ENCODE measurements at regions of chr2 and their contacts with region 1.

Region 1: DNA sequence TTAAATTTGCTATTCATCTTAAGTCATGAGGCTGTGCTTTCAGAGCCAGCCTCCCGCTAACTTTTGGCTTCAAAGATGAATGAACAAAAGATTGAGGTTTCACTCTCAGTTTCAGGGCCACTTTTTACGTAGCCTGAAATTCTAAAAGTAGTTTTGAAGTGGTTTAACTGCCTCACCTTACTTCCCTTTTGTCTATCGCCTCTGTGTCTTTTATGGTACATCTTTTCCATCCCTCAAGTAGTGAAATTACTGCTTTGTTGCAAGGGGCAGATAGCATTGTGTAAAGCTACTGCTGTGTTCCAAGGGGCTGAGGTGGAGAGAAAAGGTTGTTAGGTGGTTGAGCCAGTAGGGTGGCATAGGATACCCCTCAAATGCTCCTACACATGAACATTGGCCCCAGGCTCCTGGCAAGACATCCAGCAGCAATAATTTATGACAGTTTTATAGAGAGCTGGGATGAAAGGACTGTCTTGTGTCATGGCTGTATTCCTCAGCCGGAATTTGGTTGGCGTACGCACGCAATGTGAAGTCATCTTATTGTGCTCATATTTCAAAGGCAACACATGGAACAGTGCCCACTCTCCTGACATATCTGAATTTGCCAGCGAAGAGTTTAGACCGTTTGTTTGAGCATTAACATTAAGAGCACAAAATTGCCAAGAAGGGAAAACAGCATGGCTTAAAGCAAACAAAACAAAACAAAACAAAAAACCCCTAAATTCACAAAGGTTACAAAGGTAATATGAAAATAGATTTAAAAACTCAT is 32.2 kb downstream of the QPCT start:
- DNase-seq: peak; percentile 53
- H3K4me3 Mint-ChIP-seq: peak overlapping the region; percentile 20
- H3K27ac Mint-ChIP-seq: peak overlapping the region; percentile 58
- H3K4me1 Mint-ChIP-seq: peaks cover 30% of the 10 kb centered on the region
- H3K27me3 Mint-ChIP-seq: peaks cover 53% of the 10 kb centered on the region

Region 2: DNA sequence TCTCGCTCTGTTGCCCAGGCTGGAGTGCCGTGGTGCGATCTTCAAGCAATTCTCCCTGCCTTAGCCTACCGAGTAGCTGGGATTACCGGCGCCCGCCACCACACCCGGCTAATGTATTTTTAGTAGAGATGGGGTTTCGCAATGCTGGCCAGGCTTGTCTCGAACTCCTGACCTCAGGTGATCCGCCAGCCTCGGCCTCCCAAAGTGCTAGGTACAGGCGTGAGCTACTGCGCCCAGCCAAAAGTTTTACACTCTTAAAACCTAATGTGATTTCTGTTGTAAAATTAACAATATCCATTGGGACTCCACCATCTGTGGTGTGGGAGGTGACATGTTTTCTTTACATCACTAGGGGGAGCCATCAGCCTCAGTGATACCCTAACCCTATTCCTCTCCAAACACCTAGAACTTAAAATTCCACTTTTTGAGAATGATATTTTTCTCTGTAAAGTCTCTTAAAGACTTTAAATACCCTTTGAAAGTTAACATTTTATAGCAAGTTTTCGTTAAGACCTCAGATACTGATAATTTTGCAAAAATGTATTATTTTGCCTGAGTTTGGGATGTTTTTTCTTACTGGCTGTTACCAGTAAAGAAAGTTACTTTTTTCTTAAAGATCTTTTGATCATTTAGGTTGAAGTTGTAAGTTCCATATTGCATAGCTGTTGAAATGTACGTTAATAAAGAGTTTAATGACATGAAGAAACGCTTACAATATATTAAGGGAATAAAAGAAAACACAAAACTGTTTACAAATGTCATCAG is 208.2 kb before region 1 on chr2:
- CTCF ChIA-PET with region 1: interaction called, 3 read pairs
- POLR2A ChIA-PET with region 1: no interaction called
- intact Hi-C with region 1: loop called (anchors 10 kb)
- DNase-seq: peak; percentile 41
- H3K4me3 Mint-ChIP-seq: no peak overlapping the region
- H3K27ac Mint-ChIP-seq: no peak overlapping the region
- H3K4me1 Mint-ChIP-seq: peaks cover 2% of the 10 kb centered on the region
- H3K27me3 Mint-ChIP-seq: no peaks in the 10 kb centered on the region

Region 3: DNA sequence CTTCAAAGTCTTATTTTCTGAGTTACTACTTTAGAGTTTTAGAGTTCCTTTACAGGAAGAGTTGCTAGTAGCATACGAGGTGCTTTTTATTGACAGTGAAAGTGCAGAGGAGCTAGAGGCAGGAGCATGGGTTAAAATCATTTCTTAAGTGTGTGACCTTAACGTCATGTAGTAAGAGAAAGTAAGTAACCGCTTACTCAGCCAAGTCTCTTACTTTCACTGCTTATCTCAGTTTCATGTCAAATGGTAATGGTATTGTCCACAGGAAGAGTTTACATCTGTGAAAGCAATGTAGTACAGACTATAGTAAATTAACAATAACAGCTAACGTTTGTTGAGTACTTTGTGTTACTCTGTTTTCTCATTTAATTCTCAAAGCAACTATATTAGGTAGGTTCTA is 132.6 kb before region 1 on chr2:
- CTCF ChIA-PET with region 1: no interaction called
- POLR2A ChIA-PET with region 1: no interaction called
- intact Hi-C with region 1: loop called (anchors 1 kb)
- DNase-seq: no peak
- H3K4me3 Mint-ChIP-seq: no peak overlapping the region
- H3K27ac Mint-ChIP-seq: peak overlapping the region; percentile 14
- H3K4me1 Mint-ChIP-seq: peaks cover 24% of the 10 kb centered on the region
- H3K27me3 Mint-ChIP-seq: no peaks in the 10 kb centered on the region

Region 4: DNA sequence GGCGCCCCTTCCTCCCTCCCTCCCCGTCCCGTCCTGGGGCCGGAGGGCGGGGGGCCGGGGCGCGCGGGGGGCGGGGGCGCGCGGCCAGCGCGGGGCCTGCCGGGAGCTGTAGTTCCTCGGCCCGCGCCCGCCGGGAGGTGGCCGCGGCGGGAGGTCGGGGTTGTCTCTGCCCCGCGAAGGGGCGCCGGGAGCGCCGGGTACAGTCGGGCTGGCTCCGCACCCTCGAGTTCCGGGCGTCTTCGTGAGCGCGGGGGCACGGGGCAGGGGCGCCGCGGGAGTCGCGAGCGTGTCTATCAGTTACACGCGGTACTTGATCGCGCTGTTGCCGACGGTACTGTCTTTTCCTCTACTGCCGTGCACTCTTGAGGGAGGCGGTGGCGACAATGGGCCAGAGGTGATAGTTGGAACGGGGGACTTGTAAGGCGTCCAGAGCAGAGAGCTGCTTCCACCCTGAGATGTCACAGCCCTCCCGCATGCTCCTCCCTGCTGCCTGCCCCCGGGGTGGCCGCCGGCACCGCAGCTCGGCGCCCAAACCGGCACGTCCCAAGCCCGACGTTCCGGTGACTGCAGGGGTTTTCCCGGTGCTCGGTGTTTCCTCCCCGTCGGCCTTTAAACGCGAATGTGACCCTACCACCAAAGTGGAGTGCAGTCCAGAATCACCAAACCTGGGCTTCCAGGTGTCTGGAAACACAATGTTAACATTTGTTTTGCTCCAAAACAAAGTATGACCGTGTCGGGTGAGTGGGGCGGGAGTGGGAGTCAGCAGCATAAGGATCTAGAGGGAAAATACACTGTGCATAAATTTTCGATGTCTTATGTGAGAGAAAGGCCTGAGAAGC is 51.6 kb before region 1 on chr2 and contains the start of gene PRKD3:
- CTCF ChIA-PET with region 1: interaction called, 9 read pairs
- POLR2A ChIA-PET with region 1: interaction called, 4 read pairs
- intact Hi-C with region 1: loop called (anchors 1 kb)
- DNase-seq: peak; percentile 77
- H3K4me3 Mint-ChIP-seq: peak within 1 kb of the TSS; percentile 94
- H3K27ac Mint-ChIP-seq: peak within 1 kb of the TSS; percentile 89
- H3K4me1 Mint-ChIP-seq: peaks cover 37% of the 10 kb centered on the region
- H3K27me3 Mint-ChIP-seq: peaks cover 16% of the 10 kb centered on the region
- total RNA-seq, gene PRKD3: 22.5 to 24.7 TPM

Region 5: GRCh38 chr2:37365669-37366068 is 10.9 kb before region 1 on chr2:
- CTCF ChIA-PET with region 1: interaction called, 11 read pairs
- POLR2A ChIA-PET with region 1: interaction called, 40 read pairs
- intact Hi-C with region 1: loop called (anchors 1 kb)
- DNase-seq: peak; percentile 22
- H3K4me3 Mint-ChIP-seq: no peak overlapping the region
- H3K27ac Mint-ChIP-seq: no peak overlapping the region
- H3K4me1 Mint-ChIP-seq: no peaks in the 10 kb centered on the region
- H3K27me3 Mint-ChIP-seq: peaks cover 31% of the 10 kb centered on the region

Region 6: GRCh38 chr2:37507703-37508102 is 131.1 kb after region 1 on chr2:
- CTCF ChIA-PET with region 1: no interaction called
- POLR2A ChIA-PET with region 1: no interaction called
- intact Hi-C with region 1: no loop called
- DNase-seq: no peak
- H3K4me3 Mint-ChIP-seq: no peak overlapping the region
- H3K27ac Mint-ChIP-seq: no peak overlapping the region
- H3K4me1 Mint-ChIP-seq: no peaks in the 10 kb centered on the region
- H3K27me3 Mint-ChIP-seq: peaks cover 2% of the 10 kb centered on the region

Region 7: GRCh38 chr2:37851828-37852584 is 475.4 kb after region 1 on chr2:
- CTCF ChIA-PET with region 1: no interaction called
- POLR2A ChIA-PET with region 1: no interaction called
- intact Hi-C with region 1: no loop called
- DNase-seq: no peak
- H3K4me3 Mint-ChIP-seq: peak overlapping the region; percentile 21
- H3K27ac Mint-ChIP-seq: peak overlapping the region; percentile 83
- H3K4me1 Mint-ChIP-seq: peaks cover 22% of the 10 kb centered on the region
- H3K27me3 Mint-ChIP-seq: no peaks in the 10 kb centered on the region

Region 8: DNA sequence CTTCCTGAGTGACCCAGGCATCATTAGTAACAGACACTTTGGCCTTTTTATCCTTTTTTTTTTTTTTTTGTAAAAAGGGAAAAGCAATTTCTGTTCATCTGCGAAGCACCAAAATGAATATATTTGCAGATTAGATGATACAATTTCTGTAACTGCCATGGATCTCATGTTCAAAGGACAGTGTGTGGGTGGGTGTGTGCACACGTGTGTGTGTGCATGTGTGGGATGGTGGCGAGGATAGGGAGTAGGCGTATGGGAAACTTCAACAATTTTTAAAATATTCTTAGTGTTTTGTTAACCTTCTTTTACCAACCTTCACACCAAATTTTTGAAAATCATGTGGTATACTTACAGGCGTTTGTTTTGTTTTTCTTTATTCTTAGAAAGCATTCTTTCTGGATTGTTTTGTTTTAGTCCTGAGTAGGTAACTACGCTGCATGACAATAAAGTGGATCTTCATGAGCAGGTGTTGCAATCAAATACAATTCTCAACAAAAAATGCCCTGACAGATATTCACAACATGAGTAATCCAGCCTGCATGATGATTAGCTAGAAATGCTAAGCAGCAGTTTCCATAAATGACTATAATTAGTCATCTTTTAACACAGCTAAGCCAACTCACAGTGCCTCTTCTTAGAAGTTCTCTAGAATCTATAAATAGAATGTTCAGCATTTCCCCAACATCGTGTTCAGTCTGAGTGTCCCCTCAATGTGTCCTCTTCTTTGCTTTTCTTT is 495.0 kb after region 1 on chr2:
- CTCF ChIA-PET with region 1: interaction called, 6 read pairs
- POLR2A ChIA-PET with region 1: no interaction called
- intact Hi-C with region 1: loop called (anchors 1 kb)
- DNase-seq: no peak
- H3K4me3 Mint-ChIP-seq: peak overlapping the region; percentile 38
- H3K27ac Mint-ChIP-seq: peak overlapping the region; percentile 93
- H3K4me1 Mint-ChIP-seq: peaks cover 27% of the 10 kb centered on the region
- H3K27me3 Mint-ChIP-seq: no peaks in the 10 kb centered on the region